Heart left ventricle (tissue), 16 donors: ENCODE measurements at regions of chr11 and their contacts with region 1.

Region 1: DNA sequence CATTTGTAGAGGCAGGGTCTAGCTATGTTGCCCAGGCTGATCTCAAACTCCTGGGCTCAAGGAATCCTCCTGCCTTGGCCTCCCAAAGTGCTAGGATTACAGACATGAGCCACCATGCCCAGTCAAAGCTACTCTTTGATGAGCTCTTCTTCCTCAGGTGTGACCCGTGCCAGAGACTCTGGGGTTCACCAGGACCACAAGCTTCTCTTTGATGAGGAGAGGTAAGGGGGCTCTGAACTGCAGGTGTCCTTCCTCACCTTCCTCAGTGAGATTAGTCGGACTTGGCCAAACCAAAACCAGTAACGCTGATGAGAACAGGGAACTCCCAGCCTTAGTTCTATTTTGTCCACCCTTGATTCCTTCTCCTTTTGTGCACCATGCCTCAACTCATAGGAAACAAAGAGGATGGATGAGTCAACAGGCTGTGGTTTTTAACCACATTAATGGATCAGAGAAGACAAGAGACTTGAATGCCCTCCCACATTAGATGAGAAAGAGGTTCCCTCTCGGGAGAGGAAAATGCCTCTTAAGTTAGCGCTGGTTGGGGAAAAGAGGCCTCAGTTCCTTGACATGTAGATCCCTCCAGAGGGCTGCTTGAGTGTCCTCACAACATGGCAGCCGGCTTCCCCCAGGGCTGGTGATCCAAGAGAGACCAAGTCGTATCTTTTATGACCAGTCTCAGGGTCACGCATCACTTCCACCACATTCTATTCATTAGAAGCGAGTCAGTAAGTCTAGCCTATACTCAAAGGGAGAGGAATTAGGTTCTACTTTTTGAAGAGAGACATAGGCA is 25.7 kb upstream of the CTR9 start:
- DNase-seq: no peak
- ATAC-seq: peak in 2 of 4 donors; percentile 62
- H3K4me3 ChIP-seq: no peak overlapping the region
- H3K27ac ChIP-seq: no peak overlapping the region
- H3K4me1 ChIP-seq: peaks cover 0 to 14% (median 0%) of the 10 kb centered on the region in 12 donors
- H3K27me3 ChIP-seq: peaks cover 0 to 30% (median 0%) of the 10 kb centered on the region in 9 donors
- CTCF ChIP-seq: no peak
- POLR2A ChIP-seq: no peak

Region 2: GRCh38 chr11:10623797-10624761 is 101.2 kb before region 1 on chr11:
- intact Hi-C with region 1: loop called in 3 of 10 experiments (anchors 5 to 10 kb)
- DNase-seq: peak in 1 of 5 donors; percentile 41
- ATAC-seq: peak in 2 of 4 donors; percentile 26 to 43
- H3K4me3 ChIP-seq: no peak overlapping the region
- H3K27ac ChIP-seq: peak overlapping the region in 5 of 12 donors; percentile 1 to 85 (median 26)
- H3K4me1 ChIP-seq: peaks cover 0 to 33% (median 3%) of the 10 kb centered on the region in 12 donors
- H3K27me3 ChIP-seq: no peaks in the 10 kb centered on the region
- CTCF ChIP-seq: peak; percentile 25 to 60 (median 37)
- POLR2A ChIP-seq: no peak

Region 3: GRCh38 chr11:10659339-10660216 is 65.7 kb before region 1 on chr11:
- intact Hi-C with region 1: loop called in 4 of 10 experiments (anchors 5 to 10 kb)
- DNase-seq: peak in 1 of 5 donors; percentile 53
- ATAC-seq: peak in 3 of 4 donors; percentile 29 to 72 (median 53)
- H3K4me3 ChIP-seq: no peak overlapping the region
- H3K27ac ChIP-seq: peak overlapping the region in 9 of 12 donors; percentile 11 to 77 (median 47)
- H3K4me1 ChIP-seq: peaks cover 3 to 73% (median 46%) of the 10 kb centered on the region in 12 donors
- H3K27me3 ChIP-seq: no peaks in the 10 kb centered on the region
- CTCF ChIP-seq: no peak
- POLR2A ChIP-seq: no peak

Region 4: DNA sequence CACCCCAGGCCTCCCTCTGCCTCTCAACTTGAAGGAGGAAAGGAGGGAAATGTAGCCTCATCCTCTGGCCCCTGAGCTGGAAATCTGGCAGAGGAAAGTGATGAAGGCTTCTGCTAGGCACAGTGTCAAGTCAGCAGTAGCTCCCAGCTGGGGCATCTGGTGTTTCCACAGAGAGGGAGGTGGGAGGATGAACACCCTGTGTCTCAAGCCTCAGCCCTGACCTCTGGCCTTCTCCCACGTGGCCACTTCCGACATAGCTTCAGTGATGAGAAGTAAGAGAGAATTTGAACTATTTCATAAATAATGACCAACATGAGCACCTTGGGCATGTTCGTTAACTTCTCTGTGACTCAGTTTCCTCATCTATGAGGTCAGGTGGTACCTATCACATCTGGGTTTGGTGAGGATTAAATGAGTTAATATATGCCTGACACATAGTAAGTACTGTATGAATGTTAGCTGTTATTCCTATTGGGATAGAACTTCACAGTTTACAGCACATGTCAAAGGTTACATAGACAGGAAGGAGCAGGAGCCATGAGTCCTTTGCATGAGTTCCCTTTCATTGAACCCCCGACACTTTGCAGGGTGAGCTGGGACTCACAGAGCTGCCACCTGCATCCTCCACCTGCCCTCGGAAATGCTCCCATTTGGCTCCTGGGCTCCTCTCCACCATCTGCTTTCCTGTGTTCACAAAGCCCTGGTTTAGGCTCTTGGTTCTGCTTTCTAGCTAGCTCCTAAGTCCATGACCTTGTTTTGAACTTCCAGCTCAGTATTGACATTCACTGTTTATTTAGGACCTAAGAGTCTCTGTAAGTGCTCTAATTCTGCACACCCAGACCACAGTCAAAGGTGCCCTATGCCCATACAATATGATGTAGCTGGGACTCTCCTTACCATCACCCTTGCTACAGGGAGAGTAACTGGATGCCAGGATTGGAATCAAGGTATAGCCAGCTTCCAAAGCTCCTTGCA is 566.0 kb after region 1 on chr11:
- intact Hi-C with region 1: no loop called
- DNase-seq: no peak
- ATAC-seq: no peak
- H3K4me3 ChIP-seq: no peak overlapping the region
- H3K27ac ChIP-seq: no peak overlapping the region
- H3K4me1 ChIP-seq: peaks cover 0 to 3% (median 0%) of the 10 kb centered on the region in 12 donors
- H3K27me3 ChIP-seq: no peaks in the 10 kb centered on the region
- CTCF ChIP-seq: no peak
- POLR2A ChIP-seq: no peak